ENCODE measurements at regions of chr1 and their contacts with region 1.

Region 1: DNA sequence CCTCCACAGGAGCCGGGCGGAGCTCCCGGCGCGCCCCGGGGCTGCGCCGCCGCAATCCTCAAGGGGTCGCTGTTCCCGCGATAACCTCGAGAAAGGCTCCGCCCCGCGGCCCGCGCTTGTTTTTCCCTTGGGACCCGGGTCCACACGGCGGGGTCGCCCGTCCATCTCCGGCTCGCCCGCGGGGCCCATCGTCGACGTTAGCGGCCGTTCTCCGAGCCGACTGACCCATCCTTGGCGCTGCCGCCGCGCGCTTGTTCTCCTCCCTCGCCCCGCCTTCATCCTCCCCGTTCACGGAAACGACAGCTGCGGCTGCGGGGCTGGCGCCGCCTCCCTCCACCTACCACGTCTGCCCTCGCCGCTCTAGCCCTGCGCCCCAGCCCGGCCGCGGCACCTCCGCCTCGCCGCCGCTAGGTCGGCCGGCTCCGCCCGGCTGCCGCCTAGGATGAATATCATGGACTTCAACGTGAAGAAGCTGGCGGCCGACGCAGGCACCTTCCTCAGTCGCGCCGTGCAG is at the start of gene SH3GLB1:
- DNase-seq: peak; percentile 90
- ATAC-seq: peak; percentile 94 to 95
- total RNA-seq, gene SH3GLB1: 110 to 114 TPM

Region 2: DNA sequence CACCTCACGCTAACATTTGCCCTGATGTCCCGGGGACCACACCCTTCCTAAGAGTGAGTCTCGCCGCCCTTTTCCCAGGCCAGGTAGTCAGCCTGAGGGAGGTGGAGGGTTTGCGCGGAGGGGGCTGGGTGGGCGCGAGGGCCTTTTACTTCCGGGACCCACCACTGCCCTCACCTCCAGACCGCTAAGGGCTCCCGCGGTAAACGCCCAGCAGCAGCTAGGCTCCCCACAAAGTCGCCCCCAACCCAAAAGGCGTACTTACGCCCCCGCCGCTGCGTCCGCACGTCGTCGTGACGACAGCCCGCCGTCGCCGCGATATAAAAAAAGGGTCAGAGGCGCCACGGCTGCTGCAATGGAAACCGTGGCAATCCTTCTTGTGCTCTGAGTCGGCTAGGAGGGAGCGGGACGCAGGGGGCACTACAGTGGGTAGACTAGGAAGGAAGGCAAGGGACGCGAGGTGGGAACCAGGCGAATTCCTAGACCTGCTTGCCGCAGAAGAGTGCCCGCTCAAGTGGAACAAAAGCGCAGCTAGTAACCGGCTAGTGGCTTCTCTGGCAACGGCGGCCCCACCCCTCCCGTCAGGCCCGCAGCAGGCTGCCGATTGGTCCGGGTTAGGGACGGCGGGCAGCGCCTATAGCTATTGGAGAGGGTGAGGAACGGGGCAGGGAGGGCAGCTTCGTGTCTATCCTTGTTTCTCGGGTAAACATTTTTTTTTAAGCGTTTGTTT is 308.6 kb before region 1 on chr1 and contains the start of gene ODF2L:
- intact Hi-C with region 1: loop called in 1 of 2 experiments (anchors 10 kb)
- DNase-seq: peak; percentile 94
- ATAC-seq: peak; percentile 100
- total RNA-seq, gene ODF2L: 13.0 TPM

Region 3: GRCh38 chr1:86499987-86500593 is 204.4 kb before region 1 on chr1:
- intact Hi-C with region 1: loop called in 1 of 2 experiments (anchors 10 kb)
- DNase-seq: no peak
- ATAC-seq: no peak

Region 4: DNA sequence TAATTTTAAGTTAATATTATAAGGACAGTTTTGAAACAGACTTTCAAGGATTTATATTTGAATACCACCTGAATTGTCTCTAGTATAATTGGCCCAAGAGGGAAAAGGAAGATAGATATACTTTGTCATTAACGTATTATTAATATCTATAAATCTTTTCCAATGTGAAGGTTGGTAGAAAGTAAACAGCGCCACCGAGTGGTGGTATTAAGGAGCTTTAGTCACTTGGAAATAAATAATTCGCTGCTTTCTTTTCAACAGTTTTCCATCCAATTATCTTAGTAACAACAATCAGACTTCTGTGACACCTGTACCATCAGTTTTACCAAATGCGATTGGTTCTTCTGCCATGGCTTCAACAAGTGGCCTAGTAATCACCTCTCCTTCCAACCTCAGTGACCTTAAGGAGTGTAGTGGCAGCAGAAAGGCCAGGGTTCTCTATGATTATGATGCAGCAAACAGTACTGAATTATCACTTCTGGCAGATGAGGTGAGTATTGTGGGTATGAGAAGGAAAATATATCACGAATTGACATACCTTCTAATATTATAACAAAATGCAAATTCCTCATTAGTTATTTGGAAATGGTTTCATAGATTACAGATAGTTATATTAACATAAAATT is 37.5 kb after region 1 on chr1:
- intact Hi-C with region 1: loop called in 1 of 2 experiments (anchors 5 kb)
- DNase-seq: no peak
- ATAC-seq: no peak

Region 5: DNA sequence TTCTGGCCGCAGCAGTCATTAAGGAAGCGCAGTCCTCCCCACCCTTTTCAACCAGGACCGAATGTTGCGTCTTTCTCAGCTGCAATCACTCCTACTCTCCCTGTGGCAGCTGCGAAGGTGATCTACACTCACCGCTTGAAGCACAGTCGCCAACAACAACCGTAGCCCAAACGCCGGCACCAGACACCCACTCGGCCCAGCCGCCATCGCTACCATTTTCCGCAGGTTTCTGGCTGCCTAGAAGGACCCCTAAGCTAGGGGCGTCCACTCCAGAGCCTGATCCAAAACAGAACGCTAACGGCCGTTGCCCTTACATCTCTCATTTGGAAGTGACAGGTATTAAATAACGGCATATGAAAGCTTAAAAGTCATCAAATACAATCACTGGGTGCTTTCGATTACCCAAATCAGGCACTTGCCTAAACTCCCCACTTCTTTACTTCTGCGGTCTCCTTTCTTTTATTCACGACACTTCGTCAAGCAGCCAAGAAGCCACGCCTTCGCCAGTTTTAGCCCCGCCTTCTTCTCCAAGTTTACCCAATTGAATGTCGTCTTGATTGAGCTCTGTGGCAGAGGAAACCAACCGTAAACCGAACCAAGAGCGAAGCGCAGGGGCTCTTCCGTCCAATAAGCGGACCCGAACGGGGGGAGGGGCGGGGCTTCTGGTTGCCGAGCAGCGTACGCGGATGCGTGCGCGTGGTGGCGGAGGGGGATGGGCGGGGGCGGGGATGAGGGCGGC is 209.6 kb after region 1 on chr1 and contains the start of gene SELENOF:
- intact Hi-C with region 1: loop called in 1 of 2 experiments (anchors 10 kb)
- DNase-seq: peak; percentile 99
- ATAC-seq: peak; percentile 97 to 98
- total RNA-seq, gene SELENOF: 114 to 130 TPM

Region 6: GRCh38 chr1:87852410-87853161 is 1148.1 kb after region 1 on chr1:
- intact Hi-C with region 1: no loop called
- DNase-seq: no peak
- ATAC-seq: no peak

Measured in left cardiac atrium (tissue), 4 donors.